Right cardiac atrium (tissue), 5 donors: ENCODE measurements at regions of chr9 and their contacts with region 1.

Region 1: GRCh38 chr9:89359751-89360261 is 41.5 kb downstream of the SECISBP2 start:
- DNase-seq: no peak
- ATAC-seq: peak; percentile 38 to 81
- H3K4me3 ChIP-seq: no peak overlapping the region
- H3K27ac ChIP-seq: peak overlapping the region; percentile 38
- H3K4me1 ChIP-seq: no peaks in the 10 kb centered on the region
- H3K27me3 ChIP-seq: no peaks in the 10 kb centered on the region

Region 2: DNA sequence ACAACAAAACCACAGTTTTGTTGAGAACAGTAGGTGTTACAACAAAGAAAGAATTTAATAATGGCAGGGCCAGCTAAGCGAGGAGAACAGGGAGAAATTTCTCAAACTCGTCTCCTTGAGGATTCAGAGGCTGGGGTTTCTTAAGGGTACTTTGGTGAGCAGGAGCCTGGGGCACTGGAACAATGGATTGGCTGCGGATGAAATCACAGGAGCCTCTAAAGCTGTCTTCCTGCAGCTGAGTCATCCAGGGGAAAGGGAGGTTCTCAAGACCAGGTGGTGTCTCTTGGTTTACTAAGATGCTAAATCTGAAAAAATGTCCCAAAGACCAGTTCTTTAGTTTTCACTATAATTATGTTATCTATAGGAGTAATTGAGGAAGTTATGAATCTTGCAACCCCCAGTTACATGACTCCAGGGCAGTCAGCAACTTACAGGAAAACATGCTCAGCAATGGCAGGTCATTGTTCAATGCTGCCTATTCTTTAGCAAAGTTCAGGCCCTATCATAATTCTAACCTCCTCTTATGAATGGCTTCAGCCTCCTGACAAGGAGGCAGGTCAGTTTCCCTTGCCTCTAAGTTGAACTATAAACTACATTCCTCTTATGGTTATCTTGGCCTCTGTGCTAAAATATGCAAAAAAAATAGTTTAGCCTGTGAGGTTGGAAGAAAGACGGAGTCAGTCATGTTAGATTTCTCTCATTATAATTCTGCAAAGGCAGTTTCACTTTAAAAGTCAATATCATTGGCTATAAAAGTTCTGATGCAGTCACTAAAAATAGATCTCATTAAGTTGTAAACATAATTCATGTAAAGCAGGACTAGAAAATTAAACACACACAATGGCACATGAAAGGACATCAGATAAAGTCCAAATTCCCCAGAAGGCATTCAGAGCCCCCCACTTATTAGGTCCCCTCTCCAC is 112.1 kb before region 1 on chr9:
- intact Hi-C with region 1: no loop called
- DNase-seq: no peak
- ATAC-seq: no peak
- H3K4me3 ChIP-seq: no peak overlapping the region
- H3K27ac ChIP-seq: no peak overlapping the region
- H3K4me1 ChIP-seq: no peaks in the 10 kb centered on the region
- H3K27me3 ChIP-seq: no peaks in the 10 kb centered on the region

Region 3: GRCh38 chr9:89428901-89429890 is 69.4 kb after region 1 on chr9:
- intact Hi-C with region 1: loop called in 1 of 4 experiments (anchors 10 kb)
- DNase-seq: no peak
- ATAC-seq: no peak
- H3K4me3 ChIP-seq: no peak overlapping the region
- H3K27ac ChIP-seq: no peak overlapping the region
- H3K4me1 ChIP-seq: no peaks in the 10 kb centered on the region
- H3K27me3 ChIP-seq: no peaks in the 10 kb centered on the region

Region 4: GRCh38 chr9:89588006-89588879 is 228.4 kb after region 1 on chr9:
- intact Hi-C with region 1: no loop called
- DNase-seq: no peak
- ATAC-seq: no peak
- H3K4me3 ChIP-seq: no peak overlapping the region
- H3K27ac ChIP-seq: no peak overlapping the region
- H3K4me1 ChIP-seq: no peaks in the 10 kb centered on the region
- H3K27me3 ChIP-seq: no peaks in the 10 kb centered on the region